H1 (cell line): ENCODE measurements at regions of chr6 and their contacts with region 1.

Region 1: GRCh38 chr6:44237813-44238433 is 9.0 kb upstream of the HSP90AB1 start:
- DNase-seq: peak in 1 of 2 experiments; percentile 89
- H3K4me3 ChIP-seq: peak overlapping the region; percentile 19 to 71 (median 48)
- H3K27ac ChIP-seq: peak overlapping the region; percentile 11; the same call in 1 of the 2 replicates
- H3K4me1 ChIP-seq: peaks cover 4 to 15% (median 9%) of the 10 kb centered on the region in 4 experiments; a peak in 6 of 7 replicates
- H3K27me3 ChIP-seq: no peaks in the 10 kb centered on the region; a peak in 1 of 7 replicates
- CTCF ChIP-seq: peak in 2 of 3 experiments; percentile 88 to 93; a peak in 3 of 4 replicates
- EP300 ChIP-seq: peak in 1 of 2 experiments; percentile 33; a peak in 1 of 3 replicates
- POLR2A ChIP-seq: peak in 1 of 2 experiments; percentile 68; a peak in 2 of 3 replicates
- RAD21 ChIP-seq: peak; percentile 47 to 59; a peak in 3 of 4 replicates

Region 2: GRCh38 chr6:43926634-43927524 is 311.0 kb before region 1 on chr6:
- CTCF ChIA-PET with region 1: no interaction called
- POLR2A ChIA-PET with region 1: no interaction called
- DNase-seq: peak in 1 of 2 experiments; percentile 62
- H3K4me3 ChIP-seq: no peak overlapping the region
- H3K27ac ChIP-seq: no peak overlapping the region; the same call in 1 of the 2 replicates
- H3K4me1 ChIP-seq: peaks cover 0 to 10% (median 5%) of the 10 kb centered on the region in 4 experiments; a peak in 5 of 7 replicates
- H3K27me3 ChIP-seq: no peaks in the 10 kb centered on the region
- CTCF ChIP-seq: peak in 1 of 3 experiments; percentile 6; a peak in 1 of 4 replicates
- EP300 ChIP-seq: peak in 1 of 2 experiments; percentile 23; a peak in 1 of 3 replicates
- POLR2A ChIP-seq: no peak; a peak in 1 of 3 replicates
- RAD21 ChIP-seq: no peak

Region 3: GRCh38 chr6:44151348-44152108 is 86.4 kb before region 1 on chr6:
- CTCF ChIA-PET with region 1: interaction called, 39 read pairs
- POLR2A ChIA-PET with region 1: interaction called, 5 read pairs
- DNase-seq: peak; percentile 61 to 99
- H3K4me3 ChIP-seq: no peak overlapping the region
- H3K27ac ChIP-seq: no peak overlapping the region
- H3K4me1 ChIP-seq: peaks cover 0 to 10% (median 3%) of the 10 kb centered on the region in 4 experiments; a peak in 5 of 7 replicates
- H3K27me3 ChIP-seq: no peaks in the 10 kb centered on the region
- CTCF ChIP-seq: peak in 2 of 3 experiments; percentile 99 to 100; a peak in 3 of 4 replicates
- EP300 ChIP-seq: no peak
- POLR2A ChIP-seq: no peak
- RAD21 ChIP-seq: peak; percentile 71 to 82

Region 4: DNA sequence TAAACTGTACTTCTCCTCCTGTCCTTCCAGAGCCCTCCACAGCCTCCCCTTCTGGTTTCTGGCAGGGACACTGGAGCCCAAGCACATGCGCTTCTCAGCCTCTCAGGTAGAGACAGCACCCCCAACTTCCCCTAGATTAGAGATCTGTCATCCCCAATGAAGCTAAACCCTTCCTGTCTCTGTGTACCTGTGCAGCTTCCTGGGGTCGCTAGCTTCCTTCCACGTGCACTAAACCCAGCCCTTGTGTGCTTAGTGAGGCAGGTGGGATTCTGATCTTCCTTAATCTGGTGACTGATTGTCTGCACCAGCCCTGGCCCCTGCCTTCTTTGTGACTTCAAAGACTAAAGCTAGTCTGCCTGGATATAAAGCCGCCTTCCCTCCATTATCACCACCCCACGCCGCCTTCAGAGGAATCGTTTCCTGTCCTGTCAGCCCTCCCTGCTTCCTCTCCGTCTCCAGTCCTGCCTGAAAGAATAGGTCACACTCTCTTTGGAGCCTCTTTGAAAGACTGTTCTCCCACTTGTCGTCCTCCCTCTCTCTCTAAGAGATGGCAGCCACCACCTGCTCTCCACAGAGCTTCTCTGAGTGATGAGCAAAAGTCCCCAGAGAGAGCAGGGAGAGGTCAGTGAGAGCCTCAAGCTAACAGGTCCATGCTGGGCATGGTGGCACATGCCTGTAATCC is 51.8 kb before region 1 on chr6:
- CTCF ChIA-PET with region 1: interaction called, 287 read pairs
- POLR2A ChIA-PET with region 1: interaction called, 9 read pairs
- DNase-seq: no peak
- H3K4me3 ChIP-seq: no peak overlapping the region
- H3K27ac ChIP-seq: no peak overlapping the region
- H3K4me1 ChIP-seq: peaks cover 2 to 10% (median 5%) of the 10 kb centered on the region in 4 experiments; a peak in 6 of 7 replicates
- H3K27me3 ChIP-seq: no peaks in the 10 kb centered on the region
- CTCF ChIP-seq: no peak
- EP300 ChIP-seq: no peak
- POLR2A ChIP-seq: no peak
- RAD21 ChIP-seq: no peak

Region 5: DNA sequence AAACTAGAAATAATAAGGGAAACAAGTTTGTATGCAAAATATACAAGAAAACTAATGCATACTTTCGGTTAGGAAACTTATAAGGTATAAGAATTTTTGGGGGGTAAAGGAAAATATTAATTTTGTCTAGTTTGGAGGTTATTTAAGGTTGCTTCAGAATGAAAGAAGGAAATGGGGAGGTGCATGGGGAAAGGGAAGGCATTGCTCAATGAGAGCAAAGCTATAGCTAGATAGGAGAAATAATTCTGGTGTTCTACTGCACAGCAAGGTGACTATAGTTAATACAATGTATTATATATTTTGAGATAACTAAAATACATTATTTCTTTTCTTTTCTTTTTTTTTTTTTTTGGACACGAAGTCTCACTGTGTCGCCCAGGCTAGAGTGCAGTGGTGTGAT is 26.6 kb before region 1 on chr6:
- CTCF ChIA-PET with region 1: interaction called, 51 read pairs
- POLR2A ChIA-PET with region 1: interaction called, 4 read pairs
- DNase-seq: no peak
- H3K4me3 ChIP-seq: no peak overlapping the region
- H3K27ac ChIP-seq: no peak overlapping the region
- H3K4me1 ChIP-seq: peaks cover 4 to 15% (median 8%) of the 10 kb centered on the region in 4 experiments
- H3K27me3 ChIP-seq: no peaks in the 10 kb centered on the region
- CTCF ChIP-seq: no peak
- EP300 ChIP-seq: no peak
- POLR2A ChIP-seq: no peak
- RAD21 ChIP-seq: no peak

Region 6: GRCh38 chr6:44257025-44257752 is 19.3 kb after region 1 on chr6 and contains the start of gene SLC35B2:
- CTCF ChIA-PET with region 1: interaction called, 48 read pairs
- POLR2A ChIA-PET with region 1: interaction called, 581 read pairs
- DNase-seq: peak in 1 of 2 experiments; percentile 85
- H3K4me3 ChIP-seq: peak within 1 kb of the TSS; percentile 67 to 85 (median 75)
- H3K27ac ChIP-seq: peak within 1 kb of the TSS; percentile 88
- H3K4me1 ChIP-seq: peaks cover 1 to 20% (median 7%) of the 10 kb centered on the region in 4 experiments; a peak in 6 of 7 replicates
- H3K27me3 ChIP-seq: no peaks in the 10 kb centered on the region
- CTCF ChIP-seq: peak in 2 of 3 experiments; percentile 70 to 91; a peak in 3 of 4 replicates
- EP300 ChIP-seq: peak; percentile 21 to 23; a peak in 2 of 3 replicates
- POLR2A ChIP-seq: peak in 1 of 2 experiments; percentile 67; a peak in 1 of 3 replicates
- RAD21 ChIP-seq: peak; percentile 6 to 59; a peak in 3 of 4 replicates
- total RNA-seq, gene SLC35B2: 29.5 and 32.3 TPM in 2 replicates